MCF 10A (cell line): ENCODE measurements at regions of chr2 and their contacts with region 1.

Region 1: GRCh38 chr2:37767956-37768925 is 96.8 kb upstream of the CDC42EP3 start:
- DNase-seq: peak; percentile 79
- H3K4me3 Mint-ChIP-seq: peak overlapping the region; percentile 49
- H3K27ac Mint-ChIP-seq: peak overlapping the region; percentile 82
- H3K4me1 Mint-ChIP-seq: peaks cover 40% of the 10 kb centered on the region
- H3K27me3 Mint-ChIP-seq: no peaks in the 10 kb centered on the region
- CTCF ChIP-seq: no peak

Region 2: GRCh38 chr2:37713258-37713700 is 55.0 kb before region 1 on chr2:
- CTCF ChIA-PET with region 1: no interaction called
- POLR2A ChIA-PET with region 1: interaction called, 4 read pairs
- intact Hi-C with region 1: loop called (anchors 2 kb)
- DNase-seq: peak; percentile 61
- H3K4me3 Mint-ChIP-seq: no peak overlapping the region
- H3K27ac Mint-ChIP-seq: peak overlapping the region; percentile 46
- H3K4me1 Mint-ChIP-seq: peaks cover 20% of the 10 kb centered on the region
- H3K27me3 Mint-ChIP-seq: no peaks in the 10 kb centered on the region
- CTCF ChIP-seq: no peak